ENCODE measurements at regions of chr11 and their contacts with region 1.

Region 1: DNA sequence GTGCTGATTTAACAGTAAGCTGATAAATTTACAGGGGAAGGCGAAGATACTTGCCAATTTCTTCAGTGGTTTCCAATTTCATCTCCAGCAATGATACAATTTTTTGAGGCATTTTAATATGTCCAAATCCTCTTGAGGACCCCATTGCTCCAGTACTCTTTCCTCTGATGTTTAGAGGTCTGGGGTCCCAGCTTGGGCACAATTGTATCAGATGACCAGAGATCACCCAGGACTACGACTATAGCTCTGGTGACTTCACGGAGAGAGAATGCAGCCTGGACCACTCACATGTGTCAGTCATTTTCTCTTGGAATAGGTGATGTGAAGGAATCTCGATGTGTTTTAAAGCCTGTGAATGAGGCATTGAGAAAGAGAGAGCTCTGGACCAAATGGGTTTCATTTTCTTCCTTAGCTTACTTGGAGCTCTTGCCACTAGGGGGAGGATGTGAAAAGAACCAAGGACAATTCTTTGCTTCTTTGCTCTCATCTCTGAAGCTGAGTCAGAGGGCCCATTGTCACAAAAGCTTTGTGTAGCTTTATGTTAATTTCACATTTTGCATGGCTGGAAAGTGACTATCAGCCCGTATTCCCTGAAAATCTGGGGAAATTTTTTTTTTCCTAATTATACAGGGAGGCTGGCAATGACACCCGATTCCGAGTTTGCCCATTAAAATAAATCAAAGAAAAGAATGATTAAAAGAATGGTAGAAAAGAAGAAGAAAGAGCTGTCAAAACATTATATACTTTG is 6.7 kb upstream of the CCDC90B start:
- DNase-seq: no peak
- H3K4me3 ChIP-seq: peak overlapping the region in 2 of 3 donors; percentile 7 to 39
- H3K27ac ChIP-seq: no peak overlapping the region
- H3K4me1 ChIP-seq: no peaks in the 10 kb centered on the region
- H3K27me3 ChIP-seq: no peaks in the 10 kb centered on the region
- CTCF ChIP-seq: peak; percentile 63 to 75 (median 64)
- POLR2A ChIP-seq: no peak

Region 2: GRCh38 chr11:83092488-83093384 is 200.1 kb before region 1 on chr11:
- intact Hi-C with region 1: no loop called
- DNase-seq: peak in 1 of 2 donors; percentile 49
- H3K4me3 ChIP-seq: no peak overlapping the region
- H3K27ac ChIP-seq: peak overlapping the region in 1 of 2 donors; percentile 46
- H3K4me1 ChIP-seq: peaks cover 0 to 3% of the 10 kb centered on the region in 2 donors
- H3K27me3 ChIP-seq: no peaks in the 10 kb centered on the region
- CTCF ChIP-seq: no peak
- POLR2A ChIP-seq: no peak

Region 3: GRCh38 chr11:83241291-83241946 is 51.5 kb before region 1 on chr11:
- intact Hi-C with region 1: loop called (anchors 2 kb)
- DNase-seq: peak in 1 of 2 donors; percentile 24
- H3K4me3 ChIP-seq: no peak overlapping the region
- H3K27ac ChIP-seq: no peak overlapping the region
- H3K4me1 ChIP-seq: no peaks in the 10 kb centered on the region
- H3K27me3 ChIP-seq: no peaks in the 10 kb centered on the region
- CTCF ChIP-seq: peak in 2 of 3 donors; percentile 47 to 48
- POLR2A ChIP-seq: no peak

Region 4: DNA sequence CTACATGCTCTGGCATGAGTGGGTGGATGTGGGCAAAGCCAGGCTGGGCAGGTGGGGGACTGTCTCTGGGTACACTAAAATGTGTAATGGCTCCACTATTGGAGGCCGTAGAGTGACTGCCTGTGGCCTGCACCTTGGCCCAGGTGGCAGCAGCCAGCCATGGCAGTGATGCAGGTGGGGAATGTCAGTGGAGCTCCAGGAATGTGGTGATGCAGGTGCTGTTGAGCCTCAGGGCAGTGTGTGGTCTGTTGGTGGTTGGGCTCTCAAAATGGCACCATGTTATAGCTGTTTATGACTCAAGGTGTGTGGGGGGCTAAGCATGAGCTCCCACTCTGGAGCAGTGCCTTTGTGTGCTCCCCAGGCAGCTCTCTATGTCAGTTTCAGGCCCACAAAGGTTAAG is 33.4 kb after region 1 on chr11:
- intact Hi-C with region 1: no loop called
- DNase-seq: no peak
- H3K4me3 ChIP-seq: no peak overlapping the region
- H3K27ac ChIP-seq: no peak overlapping the region
- H3K4me1 ChIP-seq: no peaks in the 10 kb centered on the region
- H3K27me3 ChIP-seq: no peaks in the 10 kb centered on the region
- CTCF ChIP-seq: no peak
- POLR2A ChIP-seq: no peak

Measured in breast epithelium (tissue), 4 donors.